CD14-positive monocyte (primary cell): ENCODE measurements at regions of chr17 and their contacts with region 1.

Region 1: GRCh38 chr17:50269477-50270434 is 4.5 kb upstream of the TMEM92 start:
- DNase-seq: peak; percentile 50 to 75 (median 61)
- H3K4me3 ChIP-seq: no peak overlapping the region
- H3K4me3 Mint-ChIP-seq: no peak overlapping the region
- H3K27ac ChIP-seq: no peak overlapping the region
- H3K27ac Mint-ChIP-seq: no peak overlapping the region
- H3K4me1 ChIP-seq: peaks cover 22 to 26% of the 10 kb centered on the region in 2 donors
- H3K4me1 Mint-ChIP-seq: peaks cover 25% of the 10 kb centered on the region
- H3K27me3 ChIP-seq: peaks cover 0 to 19% of the 10 kb centered on the region in 2 donors
- H3K27me3 Mint-ChIP-seq: peaks cover 19 to 35% (median 20%) of the 10 kb centered on the region in 3 donors
- CTCF ChIP-seq: peak; percentile 76

Region 2: GRCh38 chr17:50209472-50210239 is 60.1 kb before region 1 on chr17:
- intact Hi-C with region 1: no loop called
- DNase-seq: no peak
- H3K4me3 ChIP-seq: no peak overlapping the region
- H3K4me3 Mint-ChIP-seq: no peak overlapping the region
- H3K27ac ChIP-seq: no peak overlapping the region
- H3K27ac Mint-ChIP-seq: no peak overlapping the region
- H3K4me1 ChIP-seq: peaks cover 0 to 5% of the 10 kb centered on the region in 2 donors
- H3K4me1 Mint-ChIP-seq: peaks cover 9% of the 10 kb centered on the region
- H3K27me3 ChIP-seq: peaks cover 0 to 18% of the 10 kb centered on the region in 2 donors
- H3K27me3 Mint-ChIP-seq: peaks cover 24 to 49% (median 35%) of the 10 kb centered on the region in 3 donors
- CTCF ChIP-seq: no peak

Region 3: GRCh38 chr17:50304781-50305404 is 35.1 kb after region 1 on chr17:
- intact Hi-C with region 1: loop called in 1 of 2 experiments (anchors 5 kb)
- DNase-seq: no peak
- H3K4me3 ChIP-seq: no peak overlapping the region
- H3K4me3 Mint-ChIP-seq: no peak overlapping the region
- H3K27ac ChIP-seq: no peak overlapping the region
- H3K27ac Mint-ChIP-seq: peak overlapping the region in 1 of 7 donors; percentile 0
- H3K4me1 ChIP-seq: peaks cover 9 to 11% of the 10 kb centered on the region in 2 donors
- H3K4me1 Mint-ChIP-seq: peaks cover 19% of the 10 kb centered on the region
- H3K27me3 ChIP-seq: no peaks in the 10 kb centered on the region
- H3K27me3 Mint-ChIP-seq: peaks cover 2 to 8% (median 6%) of the 10 kb centered on the region in 3 donors
- CTCF ChIP-seq: no peak